ENCODE measurements at regions of chr18 and their contacts with region 1.

Region 1: GRCh38 chr18:8988261-8988871 is 114.1 kb upstream of the NDUFV2 start:
- DNase-seq: no peak
- H3K4me3 ChIP-seq: no peak overlapping the region
- H3K27ac ChIP-seq: no peak overlapping the region
- H3K27me3 ChIP-seq: no peaks in the 10 kb centered on the region
- CTCF ChIP-seq: peak; percentile 90

Region 2: GRCh38 chr18:8654503-8655451 is 333.6 kb before region 1 on chr18:
- CTCF ChIA-PET with region 1: interaction called, 67 read pairs
- POLR2A ChIA-PET with region 1: no interaction called
- DNase-seq: no peak
- H3K4me3 ChIP-seq: no peak overlapping the region
- H3K27ac ChIP-seq: no peak overlapping the region
- H3K27me3 ChIP-seq: no peaks in the 10 kb centered on the region
- CTCF ChIP-seq: peak; percentile 76

Region 3: DNA sequence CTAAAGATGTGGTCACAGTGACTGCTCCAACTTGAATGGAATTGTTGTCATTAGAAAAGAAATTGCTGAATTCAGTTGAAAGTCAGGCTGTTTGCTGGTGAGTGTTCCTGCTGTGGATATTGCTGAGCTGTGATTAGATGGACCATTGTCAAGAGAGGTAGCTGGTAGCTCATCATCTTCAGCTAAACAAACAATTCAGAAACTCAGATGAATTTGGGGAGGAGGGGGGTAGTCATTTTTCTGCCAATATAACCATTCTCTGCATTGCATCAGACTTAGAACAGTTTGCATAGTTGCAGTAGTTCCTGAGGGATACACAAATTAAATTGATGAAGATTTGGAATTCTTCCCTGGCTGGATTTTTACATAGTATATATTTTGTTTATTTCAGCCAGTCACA is 174.8 kb before region 1 on chr18:
- CTCF ChIA-PET with region 1: interaction called, 10 read pairs
- POLR2A ChIA-PET with region 1: no interaction called
- DNase-seq: no peak
- H3K4me3 ChIP-seq: peak overlapping the region; percentile 8; the same call in 1 of the 2 replicates
- H3K27ac ChIP-seq: peak overlapping the region; percentile 67
- H3K27me3 ChIP-seq: no peaks in the 10 kb centered on the region
- CTCF ChIP-seq: no peak

Measured in AG04450 (cell line).